HEK293T (cell line): ENCODE measurements at regions of chr4 and their contacts with region 1.

Region 1: DNA sequence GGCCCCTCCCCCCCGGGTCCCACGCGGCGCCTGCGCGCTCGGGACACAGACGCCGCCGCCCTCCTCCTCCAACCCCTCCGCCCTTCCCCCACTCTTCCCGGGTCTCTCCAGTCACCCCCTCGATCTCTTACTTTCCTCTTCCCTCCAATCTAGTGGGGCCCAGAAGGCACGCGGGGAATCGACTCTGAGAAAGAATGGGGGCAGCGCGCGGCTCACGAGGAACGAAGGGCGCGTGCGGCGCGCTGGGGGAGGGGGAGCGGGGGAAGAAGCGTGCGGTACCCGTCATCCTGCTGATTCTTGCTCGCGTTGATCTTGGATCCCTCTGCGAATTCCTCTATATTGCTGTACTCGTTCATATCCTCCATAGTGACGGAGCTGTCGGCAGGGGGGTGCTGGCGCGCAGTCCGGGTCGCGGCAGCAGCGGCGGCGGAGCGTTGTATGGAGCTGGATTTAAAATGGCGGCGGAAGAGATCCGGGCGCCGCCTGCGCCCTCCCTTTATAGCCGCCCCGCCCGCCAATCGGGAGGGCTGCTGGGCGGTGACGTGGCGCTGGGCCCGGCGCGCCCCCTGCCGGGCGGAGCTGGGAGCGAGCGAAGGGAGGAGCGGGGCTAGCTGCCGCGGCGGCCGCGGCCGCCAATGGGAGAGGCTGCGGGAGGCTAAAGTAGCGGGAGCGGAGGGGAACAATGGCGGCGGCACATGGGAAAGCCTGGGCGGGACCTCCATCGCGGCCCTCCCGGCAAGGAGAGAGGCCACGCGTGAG is 1.1 kb downstream of the HNRNPDL start:
- DNase-seq: peak; percentile 91

Region 2: DNA sequence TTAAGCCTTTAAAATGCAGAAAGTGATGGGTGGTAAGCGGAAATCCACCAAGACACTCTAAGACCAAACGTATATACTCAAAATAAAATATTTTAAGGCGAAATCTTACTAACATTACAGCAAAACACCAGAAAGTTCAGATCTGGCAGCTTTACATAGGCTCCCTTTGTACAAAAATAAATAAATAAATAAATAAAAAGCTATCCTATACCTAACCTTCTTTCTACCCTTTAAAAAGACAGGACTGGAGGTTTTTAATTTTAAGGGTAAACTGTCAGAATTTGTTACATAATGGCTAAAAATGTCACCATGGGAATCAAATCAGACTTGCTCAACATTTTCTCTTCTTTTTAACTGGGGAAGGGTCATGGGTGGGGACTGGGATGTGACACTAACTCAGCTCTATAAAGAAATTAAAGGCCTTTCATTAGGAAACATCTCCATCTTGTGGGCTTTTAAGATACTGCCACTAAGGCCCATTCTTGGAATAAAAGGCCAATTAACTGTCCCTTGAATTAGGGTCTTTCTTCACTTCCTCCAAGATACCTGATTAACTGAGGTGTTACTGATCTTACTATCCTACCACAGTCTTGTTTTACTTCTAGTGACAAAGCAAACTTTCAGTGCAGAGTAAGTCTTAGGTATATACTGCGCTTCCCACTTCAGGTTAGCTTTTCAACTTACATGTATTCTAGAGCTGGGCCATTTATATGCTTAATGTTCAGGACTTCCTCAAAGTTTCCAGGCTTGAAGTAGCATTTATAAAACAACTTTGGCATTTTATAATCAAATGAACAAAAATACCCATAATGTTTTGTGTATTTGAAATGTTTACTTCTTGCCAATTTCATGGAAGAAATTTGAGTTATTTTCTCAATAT is 68.6 kb before region 1 on chr4:
- CTCF ChIA-PET with region 1: interaction called, 3 read pairs
- POLR2A ChIA-PET with region 1: interaction called, 19 read pairs
- DNase-seq: peak; percentile 23

Region 3: GRCh38 chr4:82367438-82368097 is 61.6 kb before region 1 on chr4:
- CTCF ChIA-PET with region 1: no interaction called
- POLR2A ChIA-PET with region 1: interaction called, 12 read pairs
- DNase-seq: no peak

Region 4: GRCh38 chr4:82373816-82374625 is 55.1 kb before region 1 on chr4 and contains the start of gene HNRNPD:
- CTCF ChIA-PET with region 1: interaction called, 3 read pairs
- POLR2A ChIA-PET with region 1: interaction called, 29 read pairs
- DNase-seq: peak; percentile 89

Region 5: GRCh38 chr4:82379964-82380733 is 49.0 kb before region 1 on chr4:
- CTCF ChIA-PET with region 1: interaction called, 3 read pairs
- POLR2A ChIA-PET with region 1: interaction called, 29 read pairs
- DNase-seq: no peak

Region 6: DNA sequence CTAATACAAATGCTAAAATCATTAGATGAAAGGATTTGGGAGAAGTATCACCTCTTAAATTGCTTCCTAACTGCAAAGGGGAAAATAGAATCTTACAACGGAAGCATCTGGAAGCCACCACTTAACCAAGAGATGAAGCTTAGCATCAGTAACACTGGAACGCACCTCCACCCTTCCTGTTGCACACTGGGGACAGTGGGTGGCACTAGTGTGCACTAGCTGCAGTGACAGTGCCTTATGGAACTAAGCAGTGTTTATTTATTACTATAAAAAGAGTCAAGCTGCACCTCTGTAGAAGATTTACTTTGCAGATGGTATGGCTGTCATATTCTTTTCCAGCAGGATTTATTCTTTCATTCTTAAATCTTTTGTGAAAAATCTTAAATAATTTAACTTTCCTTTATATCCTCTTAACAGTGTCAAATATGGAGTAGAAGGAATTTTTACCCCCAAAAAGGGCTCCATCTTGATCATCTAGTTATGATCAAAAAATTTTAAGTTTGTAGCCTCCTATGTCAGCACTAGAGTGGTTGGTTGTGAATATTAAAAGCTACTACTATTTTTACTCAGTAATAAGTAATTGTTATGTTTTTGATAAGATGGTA is 292.8 kb after region 1 on chr4:
- CTCF ChIA-PET with region 1: no interaction called
- POLR2A ChIA-PET with region 1: no interaction called
- DNase-seq: no peak